CD8-positive, alpha-beta T cell (primary cell): ENCODE measurements at regions of chr17 and their contacts with region 1.

Region 1: GRCh38 chr17:82230627-82231311 is 1.9 kb downstream of the SLC16A3 start:
- DNase-seq: peak in 6 of 9 experiments; percentile 54 to 79 (median 69)
- ATAC-seq: peak; percentile 32
- H3K4me3 ChIP-seq: peak overlapping the region; percentile 39 to 44
- H3K4me3 Mint-ChIP-seq: peak overlapping the region; percentile 82
- H3K27ac ChIP-seq: peak overlapping the region in 1 of 2 experiments; percentile 66
- H3K27ac Mint-ChIP-seq: no peak overlapping the region
- H3K4me1 ChIP-seq: peaks cover 42% of the 10 kb centered on the region
- H3K4me1 Mint-ChIP-seq: peaks cover 14% of the 10 kb centered on the region
- H3K27me3 ChIP-seq: no peaks in the 10 kb centered on the region
- H3K27me3 Mint-ChIP-seq: no peaks in the 10 kb centered on the region
- CTCF ChIP-seq: no peak

Region 2: DNA sequence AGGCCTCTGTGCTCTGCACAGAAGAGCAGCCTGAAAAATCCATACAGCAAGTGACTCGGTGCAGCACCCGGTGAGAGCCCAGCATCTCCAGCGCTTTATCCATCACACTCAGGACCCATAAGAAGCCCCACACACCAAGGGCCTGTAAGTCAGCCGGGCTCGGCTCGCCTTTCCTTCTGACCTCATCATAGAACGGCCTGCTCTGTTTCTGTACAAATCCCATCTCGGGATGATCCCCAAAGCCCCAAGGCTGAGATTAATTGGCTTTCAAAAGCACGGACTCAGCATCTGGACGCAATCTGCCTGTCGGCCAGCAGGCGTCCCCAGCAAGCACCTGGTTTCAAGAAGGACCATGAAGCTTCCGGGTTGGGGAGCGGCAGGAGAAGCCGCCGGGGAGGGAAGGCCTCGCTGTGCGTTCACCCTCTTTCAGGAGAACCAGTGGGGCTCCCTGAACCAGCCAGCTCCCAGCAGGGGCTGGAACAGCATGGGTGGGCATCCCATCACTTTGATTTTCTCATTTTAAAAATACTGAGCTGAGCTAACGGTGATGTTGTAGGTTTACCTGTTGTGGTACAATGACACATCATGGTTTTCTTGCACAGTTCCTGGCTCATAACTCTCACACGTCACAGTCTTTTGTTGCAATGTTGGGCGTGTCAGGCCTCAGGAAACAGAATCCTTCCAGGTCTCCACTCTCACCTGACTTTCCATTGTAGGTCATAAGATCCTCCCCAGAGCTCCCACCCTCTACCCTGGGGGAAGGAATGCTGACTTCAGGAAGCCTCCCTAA is 24.9 kb before region 1 on chr17:
- CTCF ChIA-PET with region 1: interaction called, 8 read pairs
- POLR2A ChIA-PET with region 1: interaction called, 7 read pairs
- intact Hi-C with region 1: loop called in 1 of 2 experiments (anchors 1 kb)
- DNase-seq: peak; percentile 61 to 91 (median 82)
- ATAC-seq: peak; percentile 83
- H3K4me3 ChIP-seq: no peak overlapping the region
- H3K4me3 Mint-ChIP-seq: peak overlapping the region; percentile 60
- H3K27ac ChIP-seq: peak overlapping the region; percentile 56 to 89
- H3K27ac Mint-ChIP-seq: peak overlapping the region; percentile 96
- H3K4me1 ChIP-seq: peaks cover 24% of the 10 kb centered on the region
- H3K4me1 Mint-ChIP-seq: peaks cover 40% of the 10 kb centered on the region
- H3K27me3 ChIP-seq: no peaks in the 10 kb centered on the region
- H3K27me3 Mint-ChIP-seq: no peaks in the 10 kb centered on the region
- CTCF ChIP-seq: peak; percentile 88

Region 3: GRCh38 chr17:82212331-82213250 is 18.2 kb before region 1 on chr17 and contains the start of gene CCDC57:
- CTCF ChIA-PET with region 1: no interaction called
- POLR2A ChIA-PET with region 1: interaction called, 10 read pairs
- intact Hi-C with region 1: loop called (anchors 1 to 2 kb)
- DNase-seq: peak in 8 of 9 experiments; percentile 54 to 81 (median 66)
- ATAC-seq: peak; percentile 54
- H3K4me3 ChIP-seq: peak within 1 kb of the TSS; percentile 52 to 77
- H3K4me3 Mint-ChIP-seq: peak within 1 kb of the TSS; percentile 85
- H3K27ac ChIP-seq: peak within 1 kb of the TSS in 1 of 2 experiments; percentile 47
- H3K27ac Mint-ChIP-seq: peak within 1 kb of the TSS; percentile 92
- H3K4me1 ChIP-seq: peaks cover 34% of the 10 kb centered on the region
- H3K4me1 Mint-ChIP-seq: peaks cover 34% of the 10 kb centered on the region
- H3K27me3 ChIP-seq: no peaks in the 10 kb centered on the region
- H3K27me3 Mint-ChIP-seq: no peaks in the 10 kb centered on the region
- CTCF ChIP-seq: no peak
- total RNA-seq, gene CCDC57: 175 to 184 TPM